ENCODE measurements at regions of chr7 and their contacts with region 1.

Region 1: DNA sequence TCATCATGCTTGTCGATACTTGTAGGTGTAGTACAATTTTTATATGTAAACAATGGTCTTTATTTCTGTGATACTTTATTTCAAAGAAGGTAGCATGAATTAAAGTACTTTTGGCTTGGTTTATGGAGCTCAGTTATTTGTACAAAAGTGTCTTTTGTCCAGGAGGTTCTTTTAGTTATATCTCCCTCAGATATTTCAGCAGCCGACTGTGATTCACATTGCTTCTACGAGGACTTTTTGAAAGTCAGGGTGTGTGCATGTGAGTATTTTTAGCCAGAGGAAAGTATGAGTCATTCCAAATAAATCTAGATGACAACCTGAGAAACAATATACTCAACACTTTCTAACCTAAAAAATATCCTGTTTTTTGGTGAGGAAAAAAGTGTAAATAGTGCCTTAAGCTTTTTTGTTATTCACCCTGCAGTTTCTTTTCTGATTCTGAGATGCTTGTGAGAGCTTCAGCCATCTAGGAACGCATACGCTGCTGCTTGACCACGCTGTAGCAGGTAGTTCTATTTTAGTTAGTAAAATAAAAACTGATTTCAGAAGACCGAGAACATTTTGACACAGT is 595 bp upstream of the SUN1 start:
- DNase-seq: peak; percentile 53
- H3K4me3 Mint-ChIP-seq: peak overlapping the region; percentile 73
- H3K27ac Mint-ChIP-seq: peak overlapping the region; percentile 99
- H3K4me1 Mint-ChIP-seq: peaks cover 68% of the 10 kb centered on the region
- H3K27me3 Mint-ChIP-seq: no peaks in the 10 kb centered on the region

Region 2: DNA sequence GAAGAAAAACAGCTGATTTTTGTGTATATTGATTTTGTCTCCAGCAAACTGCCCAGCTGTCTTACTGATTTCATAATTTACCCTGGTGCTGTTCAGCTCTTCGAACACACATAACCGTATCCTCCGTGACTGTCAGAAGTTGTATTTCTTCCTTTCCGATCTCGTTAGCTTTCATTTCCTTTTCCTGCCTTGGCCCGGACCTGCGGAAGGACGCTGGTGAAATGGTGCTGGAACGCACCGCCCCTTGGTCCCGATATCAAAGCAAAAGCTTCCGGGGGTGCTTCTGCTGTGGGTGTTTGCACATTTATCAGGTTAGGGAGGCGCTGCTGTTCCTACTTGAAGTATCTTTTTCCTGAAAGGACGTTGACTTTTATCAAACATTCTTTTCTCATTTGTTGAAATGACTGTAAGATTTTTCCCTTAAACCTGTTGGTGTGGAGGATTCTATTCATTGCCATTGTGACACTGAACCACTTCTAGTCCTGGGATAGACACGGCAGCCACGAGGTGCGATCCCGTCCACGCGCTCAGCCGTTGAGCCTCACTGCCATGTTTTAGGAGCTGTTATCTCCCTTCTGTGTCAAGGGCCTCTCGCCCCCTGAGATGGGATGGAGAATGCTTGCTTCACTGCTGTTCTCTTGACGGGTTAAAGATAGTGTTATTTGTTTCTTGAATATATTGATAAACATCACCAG is 469.1 kb before region 1 on chr7:
- CTCF ChIA-PET with region 1: no interaction called
- intact Hi-C with region 1: loop called (anchors 5 kb)
- DNase-seq: peak; percentile 69
- H3K4me3 Mint-ChIP-seq: peak overlapping the region; percentile 67
- H3K27ac Mint-ChIP-seq: peak overlapping the region; percentile 79
- H3K4me1 Mint-ChIP-seq: peaks cover 66% of the 10 kb centered on the region
- H3K27me3 Mint-ChIP-seq: no peaks in the 10 kb centered on the region

Region 3: DNA sequence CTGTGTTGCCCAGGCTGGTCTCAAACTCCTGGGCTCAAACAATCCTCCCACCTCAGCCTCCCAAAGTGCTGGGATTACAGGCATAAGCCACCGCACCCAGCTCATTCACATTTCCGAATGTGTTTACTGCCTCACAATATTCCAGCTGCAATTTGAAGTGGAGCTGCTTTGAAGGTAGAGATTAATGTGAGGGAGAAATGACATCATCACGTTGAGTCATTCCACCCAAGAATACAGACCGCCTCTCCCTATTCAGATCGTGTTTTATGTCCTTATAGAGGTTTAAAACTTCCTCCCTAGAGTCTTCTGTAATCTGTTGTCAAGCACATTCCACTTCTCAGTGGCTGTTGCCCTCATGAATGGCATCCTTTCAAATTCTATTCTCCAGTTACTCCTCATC is 211.6 kb before region 1 on chr7:
- CTCF ChIA-PET with region 1: no interaction called
- intact Hi-C with region 1: loop called (anchors 1 kb)
- DNase-seq: peak; percentile 59
- H3K4me3 Mint-ChIP-seq: no peak overlapping the region
- H3K27ac Mint-ChIP-seq: peak overlapping the region; percentile 99
- H3K4me1 Mint-ChIP-seq: peaks cover 60% of the 10 kb centered on the region
- H3K27me3 Mint-ChIP-seq: no peaks in the 10 kb centered on the region

Region 4: DNA sequence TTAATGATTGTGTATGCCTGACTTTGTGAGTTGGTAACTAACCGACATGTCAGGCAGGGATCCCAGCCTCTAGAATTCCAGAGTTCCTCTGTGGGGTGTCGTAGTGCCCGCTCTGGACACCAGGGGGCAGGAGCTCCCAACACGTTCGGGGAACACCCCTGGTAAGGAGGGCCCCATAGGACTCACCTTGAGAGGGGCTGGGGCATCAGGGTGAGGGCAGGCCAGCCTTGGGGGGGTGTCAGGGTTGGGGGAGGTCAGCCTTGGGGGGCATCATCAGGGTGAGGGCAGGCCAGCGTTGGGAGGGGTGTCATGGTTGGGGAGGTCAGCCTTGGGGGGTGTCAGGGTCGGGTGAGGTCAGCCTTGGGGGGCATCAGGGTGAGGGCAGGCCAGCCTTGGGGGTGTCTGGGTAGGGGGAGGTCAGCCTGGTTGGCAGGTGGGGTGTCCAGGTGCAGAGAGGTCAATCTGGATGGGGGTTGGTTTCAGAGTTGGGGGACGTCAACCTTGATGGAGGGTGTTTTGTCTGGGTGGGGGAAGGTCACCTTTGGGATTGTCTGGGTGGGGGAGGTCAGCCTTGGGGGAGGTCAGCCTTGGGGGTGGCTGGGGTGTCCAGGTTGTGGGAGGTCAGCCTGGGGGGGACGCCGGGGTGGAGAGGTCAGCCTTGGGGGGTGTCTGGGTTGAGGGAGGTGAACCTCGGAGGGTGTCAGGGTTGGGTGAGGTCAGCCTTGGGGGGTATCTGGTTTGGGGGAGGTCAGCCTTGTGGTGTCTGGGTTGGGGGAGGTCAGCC is 45.0 kb before region 1 on chr7:
- CTCF ChIA-PET with region 1: interaction called, 7 read pairs
- intact Hi-C with region 1: loop called (anchors 1 kb)
- DNase-seq: peak; percentile 84
- H3K4me3 Mint-ChIP-seq: no peak overlapping the region
- H3K27ac Mint-ChIP-seq: no peak overlapping the region
- H3K4me1 Mint-ChIP-seq: no peaks in the 10 kb centered on the region
- H3K27me3 Mint-ChIP-seq: no peaks in the 10 kb centered on the region

Region 5: DNA sequence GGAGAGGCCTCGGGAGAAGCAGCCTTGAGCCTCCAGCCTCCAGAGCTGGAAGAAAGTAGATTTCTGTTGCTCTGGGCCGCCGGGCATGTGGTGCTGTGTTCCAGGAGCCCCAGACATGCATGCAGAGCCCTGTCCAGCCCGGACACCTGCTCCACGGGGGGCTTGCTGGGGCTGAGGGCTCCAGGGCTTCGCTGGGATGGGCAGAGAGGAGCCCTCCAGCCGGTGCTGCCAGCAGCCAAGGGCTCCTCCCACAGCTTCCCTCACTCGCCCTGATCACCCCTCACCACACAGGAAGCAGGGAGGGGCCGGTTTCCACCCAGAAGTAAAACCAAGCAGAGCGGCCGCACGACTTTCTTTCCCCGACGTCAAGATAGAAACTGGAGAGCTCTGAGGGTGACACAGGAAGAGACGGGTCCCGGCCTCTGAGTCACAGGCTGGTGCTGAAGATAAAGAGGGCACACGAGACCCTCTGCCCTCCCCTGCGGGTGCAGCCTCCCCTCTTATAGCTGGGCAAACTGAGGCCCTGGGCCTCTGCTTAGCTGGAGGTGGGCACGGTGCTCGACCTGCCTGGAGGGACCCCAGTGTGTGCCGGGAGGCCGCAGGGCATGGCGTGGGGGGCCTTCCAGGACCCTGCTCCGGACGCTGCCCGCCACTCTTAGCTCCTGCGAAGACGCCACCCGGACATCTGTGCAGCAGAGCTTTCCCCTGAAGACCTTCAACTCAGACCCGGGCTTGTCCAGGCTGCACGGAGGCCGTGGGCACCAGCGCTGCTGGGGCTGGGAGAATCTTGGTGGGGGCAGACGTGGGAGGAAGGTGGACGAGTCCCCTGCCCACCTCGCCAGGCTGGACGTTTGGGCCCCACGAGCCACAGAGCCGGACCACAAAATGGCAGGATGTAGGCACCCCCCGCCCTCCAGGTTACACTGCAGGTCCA is 91.7 kb after region 1 on chr7:
- CTCF ChIA-PET with region 1: no interaction called
- intact Hi-C with region 1: loop called (anchors 2 kb)
- DNase-seq: peak; percentile 98
- H3K4me3 Mint-ChIP-seq: peak overlapping the region; percentile 78
- H3K27ac Mint-ChIP-seq: peak overlapping the region; percentile 91
- H3K4me1 Mint-ChIP-seq: peaks cover 43% of the 10 kb centered on the region
- H3K27me3 Mint-ChIP-seq: no peaks in the 10 kb centered on the region